Activated naive CD4-positive, alpha-beta T cell treated with anti-CD3 and anti-CD28 coated beads, Interleukin-2, amount 10 ng/mL, durations not matched to agents 7 days and 5 days (primary cell): ENCODE measurements at regions of chr1 and their contacts with region 1.

Region 1: GRCh38 chr1:156659994-156660751 is 17.0 kb downstream of the NES start:
- DNase-seq: peak; percentile 94
- H3K4me3 Mint-ChIP-seq: peak overlapping the region; percentile 69
- H3K27ac Mint-ChIP-seq: peak overlapping the region; percentile 80
- H3K4me1 Mint-ChIP-seq: peaks cover 67% of the 10 kb centered on the region
- H3K27me3 Mint-ChIP-seq: peaks cover 84% of the 10 kb centered on the region

Region 2: DNA sequence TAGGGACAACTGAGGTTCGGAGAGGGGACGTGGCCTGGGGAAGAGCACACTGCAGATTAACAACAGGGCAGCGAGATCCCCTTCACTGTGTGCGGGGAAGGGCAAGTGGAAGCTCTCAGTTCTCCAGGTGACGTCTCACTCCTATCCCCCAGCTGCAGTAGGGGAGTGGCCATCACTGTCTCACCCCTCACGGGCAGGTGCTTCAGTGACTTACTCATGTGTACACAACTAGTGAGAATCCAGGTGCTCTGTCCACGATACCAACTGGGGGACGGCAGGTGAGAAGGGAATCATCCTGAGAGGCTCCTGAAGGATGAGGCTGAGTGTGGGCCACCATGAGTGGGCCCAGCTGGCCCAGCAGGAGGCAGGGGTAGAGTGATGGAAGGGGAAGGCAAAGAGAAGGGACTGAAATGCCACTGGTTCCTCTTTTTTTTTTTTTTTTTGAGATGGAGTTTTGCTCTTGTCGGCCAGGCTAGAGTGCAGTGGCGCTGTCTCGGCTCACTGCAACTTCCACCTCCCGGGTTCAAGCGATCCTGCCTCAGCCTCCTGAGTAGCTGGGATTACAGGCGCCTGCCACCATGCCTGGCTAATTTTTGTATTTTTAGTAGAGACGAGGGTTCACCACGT is 265.2 kb before region 1 on chr1:
- CTCF ChIA-PET with region 1: no interaction called
- DNase-seq: no peak
- H3K4me3 Mint-ChIP-seq: no peak overlapping the region
- H3K27ac Mint-ChIP-seq: no peak overlapping the region
- H3K4me1 Mint-ChIP-seq: no peaks in the 10 kb centered on the region
- H3K27me3 Mint-ChIP-seq: peaks cover 44% of the 10 kb centered on the region

Region 3: GRCh38 chr1:156571949-156572662 is 88.1 kb before region 1 on chr1 and contains the start of gene IQGAP3:
- CTCF ChIA-PET with region 1: no interaction called
- DNase-seq: peak; percentile 91
- H3K4me3 Mint-ChIP-seq: peak within 1 kb of the TSS; percentile 86
- H3K27ac Mint-ChIP-seq: peak within 1 kb of the TSS; percentile 51
- H3K4me1 Mint-ChIP-seq: peaks cover 24% of the 10 kb centered on the region
- H3K27me3 Mint-ChIP-seq: peaks cover 39% of the 10 kb centered on the region

Region 4: DNA sequence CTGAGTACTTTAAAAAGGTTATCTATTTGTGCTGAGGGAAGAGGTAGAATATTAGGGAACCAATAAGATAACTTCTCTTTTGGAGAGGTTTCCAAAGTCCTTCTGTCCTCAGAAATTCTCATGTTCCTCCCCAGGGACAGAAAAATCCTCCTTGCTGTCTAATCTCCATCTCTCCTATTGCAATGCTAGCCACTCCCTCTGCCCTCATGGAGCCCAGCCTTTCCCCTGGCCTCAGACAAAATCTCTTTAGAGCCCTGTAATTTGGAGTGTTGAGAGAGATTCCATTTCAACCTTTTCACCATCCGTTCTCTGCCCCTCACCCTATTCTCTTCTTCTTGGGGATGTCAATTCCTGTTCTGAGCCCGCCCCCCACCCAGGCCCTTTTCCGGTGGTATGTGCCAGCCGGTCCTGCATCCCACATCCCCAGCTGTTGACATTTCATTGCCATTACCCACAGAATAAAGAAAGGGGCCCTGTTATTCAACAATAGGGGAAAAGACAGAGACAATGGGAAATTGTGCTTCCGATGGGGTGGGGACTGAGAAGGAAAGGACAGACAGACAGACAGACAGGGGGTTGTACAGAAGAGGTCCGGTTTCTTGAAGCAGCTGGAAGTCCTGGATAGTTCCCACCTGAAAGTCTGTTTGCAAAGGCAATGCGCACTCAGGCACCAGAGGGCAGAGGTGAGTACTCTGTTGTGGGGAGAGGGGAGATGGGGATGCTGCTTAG is 41.2 kb before region 1 on chr1 and contains the start of gene HAPLN2:
- CTCF ChIA-PET with region 1: interaction called, 264 read pairs
- DNase-seq: peak; percentile 52
- H3K4me3 Mint-ChIP-seq: no peak within 1 kb of the TSS
- H3K27ac Mint-ChIP-seq: no peak within 1 kb of the TSS
- H3K4me1 Mint-ChIP-seq: no peaks in the 10 kb centered on the region
- H3K27me3 Mint-ChIP-seq: peaks cover 90% of the 10 kb centered on the region

Region 5: DNA sequence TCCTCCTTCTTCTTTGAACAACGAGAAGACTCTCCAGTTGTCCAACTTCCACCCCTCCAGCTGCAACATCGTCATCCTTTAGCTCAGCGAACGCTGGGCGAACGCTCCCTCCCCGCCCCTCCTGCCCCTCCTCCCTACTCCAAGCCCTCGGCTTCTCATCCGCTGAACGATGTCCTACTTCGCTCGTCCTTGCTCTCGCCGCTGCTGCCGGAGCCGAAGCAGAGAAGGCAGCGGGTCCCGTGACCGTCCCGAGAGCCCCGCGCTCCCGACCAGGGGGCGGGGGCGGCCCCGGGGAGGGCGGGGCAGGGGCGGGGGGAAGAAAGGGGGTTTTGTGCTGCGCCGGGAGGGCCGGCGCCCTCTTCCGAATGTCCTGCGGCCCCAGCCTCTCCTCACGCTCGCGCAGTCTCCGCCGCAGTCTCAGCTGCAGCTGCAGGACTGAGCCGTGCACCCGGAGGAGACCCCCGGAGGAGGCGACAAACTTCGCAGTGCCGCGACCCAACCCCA is 18.4 kb before region 1 on chr1 and contains the start of gene BCAN:
- CTCF ChIA-PET with region 1: interaction called, 30 read pairs
- DNase-seq: peak; percentile 38
- H3K4me3 Mint-ChIP-seq: no peak within 1 kb of the TSS
- H3K27ac Mint-ChIP-seq: peak within 1 kb of the TSS; percentile 68
- H3K4me1 Mint-ChIP-seq: peaks cover 33% of the 10 kb centered on the region
- H3K27me3 Mint-ChIP-seq: peaks cover 94% of the 10 kb centered on the region

Region 6: GRCh38 chr1:156677616-156678596 is 17.7 kb after region 1 on chr1:
- CTCF ChIA-PET with region 1: interaction called, 125 read pairs
- DNase-seq: peak; percentile 49
- H3K4me3 Mint-ChIP-seq: no peak overlapping the region
- H3K27ac Mint-ChIP-seq: no peak overlapping the region
- H3K4me1 Mint-ChIP-seq: peaks cover 9% of the 10 kb centered on the region
- H3K27me3 Mint-ChIP-seq: peaks cover 98% of the 10 kb centered on the region

Region 7: DNA sequence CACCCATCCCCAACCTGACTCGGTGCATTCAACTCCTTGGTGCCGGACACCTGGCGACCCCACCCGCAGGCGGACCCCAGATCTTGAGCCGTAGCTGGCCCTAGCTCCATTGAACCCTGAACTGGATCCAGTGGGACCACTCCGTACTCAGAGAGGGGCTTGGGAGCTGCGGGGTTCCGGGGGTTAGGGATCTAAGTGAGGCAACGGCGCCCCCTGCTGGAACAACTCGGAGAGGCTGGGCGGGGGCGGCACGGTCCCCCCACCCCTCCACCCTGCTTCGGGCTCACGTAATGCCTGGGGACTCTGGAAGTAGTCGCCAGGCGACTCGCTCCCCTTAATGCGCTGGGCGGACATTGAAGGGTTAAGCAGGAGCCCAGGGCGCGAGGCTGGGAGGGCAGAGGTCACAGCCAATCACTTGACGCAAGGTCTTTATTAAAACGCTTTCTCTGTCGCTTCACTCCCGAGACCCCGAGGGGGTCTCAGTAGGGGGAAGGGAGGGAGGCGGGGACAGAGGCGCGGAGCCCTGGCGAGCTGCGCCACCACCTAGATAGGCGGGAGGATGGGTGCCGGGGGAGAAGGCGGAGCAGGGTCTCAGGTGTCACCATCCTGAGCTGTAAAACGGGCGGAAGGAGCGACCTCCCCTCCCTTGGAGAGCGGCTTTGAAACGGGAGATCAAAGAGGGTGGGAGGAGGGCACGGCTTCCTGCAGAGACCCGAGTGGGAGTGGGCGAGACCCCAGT is 45.9 kb after region 1 on chr1:
- CTCF ChIA-PET with region 1: interaction called, 23 read pairs
- DNase-seq: peak; percentile 78
- H3K4me3 Mint-ChIP-seq: peak overlapping the region; percentile 77
- H3K27ac Mint-ChIP-seq: no peak overlapping the region
- H3K4me1 Mint-ChIP-seq: peaks cover 24% of the 10 kb centered on the region
- H3K27me3 Mint-ChIP-seq: peaks cover 72% of the 10 kb centered on the region